Breast epithelium (tissue), 4 donors: ENCODE measurements at regions of chr14 and their contacts with region 1.

Region 1: DNA sequence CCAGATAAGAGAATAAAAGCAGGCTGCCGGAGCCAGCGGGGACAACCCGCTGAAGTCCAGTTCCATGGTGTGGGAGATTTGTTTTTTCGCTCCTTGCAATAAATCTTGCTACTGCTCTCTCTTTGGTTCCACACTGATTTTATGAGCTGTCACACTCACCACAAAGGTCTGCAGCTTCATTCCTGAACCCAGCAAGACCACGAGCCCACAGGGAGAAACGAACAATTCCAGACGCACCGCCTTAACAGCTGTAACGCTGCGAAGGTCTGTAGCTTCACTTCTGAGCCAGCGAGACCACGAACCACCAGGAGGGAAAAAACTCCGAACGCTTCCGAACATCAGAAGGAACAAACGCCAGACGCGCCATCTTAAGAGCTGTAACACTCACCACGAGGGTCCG is 2.8 kb upstream of the CNIH1 start:
- DNase-seq: no peak
- H3K4me3 ChIP-seq: peak overlapping the region in 1 of 3 donors; percentile 17
- H3K27ac ChIP-seq: peak overlapping the region in 1 of 2 donors; percentile 54
- H3K4me1 ChIP-seq: no peaks in the 10 kb centered on the region
- H3K27me3 ChIP-seq: no peaks in the 10 kb centered on the region
- CTCF ChIP-seq: no peak
- POLR2A ChIP-seq: no peak

Region 2: GRCh38 chr14:54420013-54420809 is 23.8 kb before region 1 on chr14:
- intact Hi-C with region 1: no loop called
- DNase-seq: no peak
- H3K4me3 ChIP-seq: no peak overlapping the region
- H3K27ac ChIP-seq: no peak overlapping the region
- H3K4me1 ChIP-seq: no peaks in the 10 kb centered on the region
- H3K27me3 ChIP-seq: no peaks in the 10 kb centered on the region
- CTCF ChIP-seq: peak in 2 of 3 donors; percentile 37 to 46
- POLR2A ChIP-seq: no peak

Region 3: GRCh38 chr14:54490445-54491175 is 46.6 kb after region 1 on chr14:
- intact Hi-C with region 1: loop called (anchors 2 kb)
- DNase-seq: no peak
- H3K4me3 ChIP-seq: no peak overlapping the region
- H3K27ac ChIP-seq: peak overlapping the region; percentile 18 to 33
- H3K4me1 ChIP-seq: no peaks in the 10 kb centered on the region
- H3K27me3 ChIP-seq: no peaks in the 10 kb centered on the region
- CTCF ChIP-seq: no peak
- POLR2A ChIP-seq: no peak